ENCODE measurements at regions of chr3 and their contacts with region 1.

Region 1: GRCh38 chr3:49112262-49112661 is 7.7 kb upstream of the QARS1 start:
- DNase-seq: no peak
- H3K4me3 ChIP-seq: no peak overlapping the region
- CTCF ChIP-seq: no peak

Region 2: GRCh38 chr3:48984663-48985062 is 127.6 kb before region 1 on chr3:
- in situ Hi-C with region 1: no loop called
- DNase-seq: no peak
- H3K4me3 ChIP-seq: no peak overlapping the region
- CTCF ChIP-seq: no peak

Region 3: DNA sequence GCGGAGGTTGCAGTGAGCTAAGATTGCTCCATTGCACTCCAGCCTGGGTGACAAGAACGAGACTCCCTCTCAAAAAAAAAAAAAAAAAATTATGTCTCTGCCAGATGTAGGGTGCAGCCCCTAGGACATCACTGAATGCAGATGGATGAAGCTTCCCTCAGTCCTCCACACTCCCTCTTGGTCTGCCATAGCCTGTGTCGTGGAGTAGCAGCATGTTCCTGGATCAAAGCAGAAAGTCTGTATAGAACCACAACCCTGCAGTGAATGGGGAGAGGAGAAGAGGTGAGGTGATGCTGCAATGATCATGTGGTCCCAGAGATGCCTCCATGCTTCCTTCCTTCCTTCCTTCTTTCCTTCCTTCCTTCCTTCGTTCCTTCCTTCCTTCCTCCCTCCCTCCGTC is 35.9 kb after region 1 on chr3:
- in situ Hi-C with region 1: loop called (anchors 5 kb)
- DNase-seq: no peak
- H3K4me3 ChIP-seq: no peak overlapping the region
- CTCF ChIP-seq: no peak

Region 4: DNA sequence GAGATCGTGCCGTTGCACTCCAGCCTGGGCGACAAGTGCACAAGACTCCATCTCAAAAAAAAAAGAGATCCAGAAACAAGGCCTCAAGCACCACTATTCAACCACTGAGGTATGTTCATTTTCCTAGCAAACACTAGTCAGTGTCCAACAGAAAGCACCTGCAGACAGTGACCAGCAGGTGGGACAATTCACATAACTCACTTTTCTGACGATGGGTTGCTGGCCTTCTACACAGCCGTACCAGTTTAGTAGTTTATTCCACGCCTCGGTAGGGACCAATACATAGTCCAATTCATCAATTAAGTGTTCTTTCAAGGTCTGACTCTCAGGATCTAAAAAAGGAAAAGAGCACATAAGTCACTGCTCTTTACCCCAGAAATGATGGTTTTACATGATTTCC is 215.2 kb after region 1 on chr3:
- in situ Hi-C with region 1: no loop called
- DNase-seq: no peak
- H3K4me3 ChIP-seq: no peak overlapping the region
- CTCF ChIP-seq: peak; percentile 35

Measured in astrocyte of the cerebellum (primary cell).